Naive thymus-derived CD4-positive, alpha-beta T cell (primary cell): ENCODE measurements at regions of chr14 and their contacts with region 1.

Region 1: DNA sequence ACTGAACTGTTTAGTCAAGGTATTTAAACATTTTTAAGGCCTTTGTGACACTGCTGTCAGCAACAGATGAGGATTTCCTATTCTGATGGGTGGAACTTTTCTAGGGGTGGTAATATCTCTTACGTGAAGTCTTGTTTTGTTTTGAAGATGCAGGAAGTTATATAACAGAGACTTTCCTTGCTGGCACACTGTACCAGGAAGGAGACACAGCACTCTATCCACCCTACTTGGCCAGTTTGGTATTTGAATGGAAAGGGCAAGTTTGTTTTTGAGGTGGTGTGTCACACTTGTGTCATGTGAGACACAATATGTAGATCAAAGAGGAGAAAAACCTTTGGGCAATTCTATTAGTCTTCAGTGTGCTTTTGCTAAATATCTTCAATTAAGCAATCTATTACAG is 51.6 kb upstream of the SRP54 start:
- DNase-seq: peak in 7 of 9 donors; percentile 69 to 89 (median 83)
- ATAC-seq: peak; percentile 95
- H3K4me3 ChIP-seq: peak overlapping the region; percentile 22
- H3K4me3 Mint-ChIP-seq: peak overlapping the region; percentile 31 to 87 (median 76)
- H3K27ac ChIP-seq: peak overlapping the region; percentile 84
- H3K27ac Mint-ChIP-seq: peak overlapping the region; percentile 96 to 100 (median 98)
- H3K4me1 ChIP-seq: peaks cover 28 to 30% of the 10 kb centered on the region in 2 donors
- H3K4me1 Mint-ChIP-seq: peaks cover 15 to 44% (median 37%) of the 10 kb centered on the region in 7 donors
- H3K27me3 ChIP-seq: no peaks in the 10 kb centered on the region
- H3K27me3 Mint-ChIP-seq: no peaks in the 10 kb centered on the region

Region 2: DNA sequence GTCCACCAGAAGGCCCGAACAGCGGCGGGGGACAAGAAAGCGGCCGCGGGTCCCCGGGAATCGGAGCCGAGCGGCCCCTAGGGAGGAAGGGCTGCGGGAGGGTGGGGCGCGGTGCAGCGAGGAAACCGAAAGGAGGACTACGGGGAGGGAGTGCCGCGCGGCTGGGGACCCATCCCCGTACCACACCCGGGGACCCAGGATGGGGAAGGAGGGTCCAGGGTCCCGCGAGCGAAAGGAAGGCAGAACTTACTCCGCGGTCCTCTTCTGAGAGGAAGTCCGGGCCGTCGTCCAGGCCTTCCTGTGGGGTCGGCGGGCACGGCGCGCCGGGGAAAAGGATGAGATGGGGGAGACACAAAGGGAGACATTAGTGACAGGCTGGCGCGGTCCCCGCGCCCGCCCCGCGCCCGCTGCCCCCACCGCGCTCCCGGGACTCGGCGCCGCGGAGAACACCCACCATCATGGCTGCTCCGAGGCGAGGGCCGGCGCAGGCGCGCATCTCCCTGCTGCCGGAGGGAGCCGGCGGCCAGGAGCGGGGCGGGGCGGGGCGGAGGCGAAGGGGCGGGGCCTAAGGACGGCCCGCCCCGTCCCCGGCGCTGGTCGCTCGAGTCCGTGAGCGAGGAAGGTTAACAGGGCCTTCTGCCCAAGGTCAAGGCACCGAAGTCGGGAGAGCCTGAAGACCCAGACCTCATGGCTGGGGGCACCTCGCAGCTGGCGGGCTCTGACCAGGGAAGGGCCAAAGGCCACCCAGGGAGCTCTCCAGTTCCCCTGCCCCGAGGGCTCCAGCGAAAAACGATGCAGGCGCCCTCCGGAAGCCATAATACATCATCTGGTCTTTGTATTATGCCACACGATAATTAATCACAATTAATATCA is 301.3 kb before region 1 on chr14 and contains the start of gene SNX6:
- CTCF ChIA-PET with region 1: no interaction called
- POLR2A ChIA-PET with region 1: no interaction called
- intact Hi-C with region 1: loop called in 1 of 2 experiments (anchors 1 kb)
- DNase-seq: peak; percentile 75 to 87 (median 83)
- ATAC-seq: peak; percentile 100
- H3K4me3 ChIP-seq: peak within 1 kb of the TSS; percentile 72
- H3K4me3 Mint-ChIP-seq: peak within 1 kb of the TSS; percentile 89 to 100 (median 98)
- H3K27ac ChIP-seq: peak within 1 kb of the TSS; percentile 98
- H3K27ac Mint-ChIP-seq: peak within 1 kb of the TSS; percentile 92 to 97 (median 96)
- H3K4me1 ChIP-seq: peaks cover 17 to 20% of the 10 kb centered on the region in 2 donors
- H3K4me1 Mint-ChIP-seq: peaks cover 6 to 49% (median 33%) of the 10 kb centered on the region in 7 donors
- H3K27me3 ChIP-seq: no peaks in the 10 kb centered on the region
- H3K27me3 Mint-ChIP-seq: peaks cover 0 to 18% (median 0%) of the 10 kb centered on the region in 5 donors
- total RNA-seq, gene SNX6: 56.6 to 78.9 (median 59.7) TPM

Region 3: DNA sequence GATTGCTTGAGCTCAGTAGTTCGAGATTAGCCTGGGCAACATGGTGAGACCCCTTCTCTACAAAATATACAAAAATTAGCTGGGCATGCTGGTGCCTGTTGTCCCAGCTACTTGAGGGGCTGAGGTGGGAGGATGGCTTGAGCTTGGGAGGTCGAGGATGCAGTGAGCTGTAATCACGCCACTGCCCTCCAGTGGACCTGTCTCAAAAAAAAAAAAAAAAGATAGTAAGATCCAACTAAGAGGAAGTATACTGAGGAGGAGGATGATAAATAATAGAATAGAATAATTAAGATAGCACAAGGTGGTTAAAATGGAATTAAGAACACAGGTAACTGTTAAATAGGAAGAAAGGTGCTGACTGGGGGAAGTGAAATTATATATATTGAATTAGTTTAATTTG is 19.0 kb before region 1 on chr14:
- CTCF ChIA-PET with region 1: no interaction called
- POLR2A ChIA-PET with region 1: no interaction called
- intact Hi-C with region 1: loop called in 1 of 2 experiments (anchors 2 kb)
- DNase-seq: no peak
- ATAC-seq: no peak
- H3K4me3 ChIP-seq: no peak overlapping the region
- H3K4me3 Mint-ChIP-seq: no peak overlapping the region
- H3K27ac ChIP-seq: no peak overlapping the region
- H3K27ac Mint-ChIP-seq: peak overlapping the region in 5 of 9 donors; percentile 2 to 71 (median 16)
- H3K4me1 ChIP-seq: no peaks in the 10 kb centered on the region
- H3K4me1 Mint-ChIP-seq: peaks cover 0 to 10% (median 0%) of the 10 kb centered on the region in 7 donors
- H3K27me3 ChIP-seq: no peaks in the 10 kb centered on the region
- H3K27me3 Mint-ChIP-seq: no peaks in the 10 kb centered on the region

Region 4: DNA sequence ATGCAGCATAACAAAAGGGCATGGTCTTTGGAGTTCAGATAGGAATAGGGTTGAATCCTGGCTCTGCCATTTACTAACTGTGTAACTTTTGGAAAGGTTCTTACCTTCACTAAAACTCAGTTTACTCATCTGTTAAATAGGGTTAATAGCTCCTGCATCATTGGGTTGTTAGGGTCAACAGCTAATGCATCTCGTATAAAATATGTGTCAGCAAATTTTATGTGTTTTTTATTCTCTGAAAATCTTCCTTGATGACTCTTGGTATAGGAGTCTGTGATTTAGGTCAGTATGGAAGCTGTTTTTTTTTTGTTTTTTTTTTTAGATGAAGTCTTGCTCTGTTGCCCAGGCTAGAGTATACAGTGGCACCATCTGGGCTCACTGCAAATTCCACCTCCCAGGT is 15.5 kb after region 1 on chr14:
- CTCF ChIA-PET with region 1: interaction called, 3 read pairs
- POLR2A ChIA-PET with region 1: interaction called, 5 read pairs
- intact Hi-C with region 1: loop called in 1 of 2 experiments (anchors 2 kb)
- DNase-seq: no peak
- ATAC-seq: no peak
- H3K4me3 ChIP-seq: no peak overlapping the region
- H3K4me3 Mint-ChIP-seq: no peak overlapping the region
- H3K27ac ChIP-seq: no peak overlapping the region
- H3K27ac Mint-ChIP-seq: peak overlapping the region in 8 of 9 donors; percentile 17 to 82 (median 29)
- H3K4me1 ChIP-seq: no peaks in the 10 kb centered on the region
- H3K4me1 Mint-ChIP-seq: peaks cover 0 to 4% (median 4%) of the 10 kb centered on the region in 7 donors
- H3K27me3 ChIP-seq: no peaks in the 10 kb centered on the region
- H3K27me3 Mint-ChIP-seq: no peaks in the 10 kb centered on the region